ENCODE measurements at regions of chr12 and their contacts with region 1.

Region 1: DNA sequence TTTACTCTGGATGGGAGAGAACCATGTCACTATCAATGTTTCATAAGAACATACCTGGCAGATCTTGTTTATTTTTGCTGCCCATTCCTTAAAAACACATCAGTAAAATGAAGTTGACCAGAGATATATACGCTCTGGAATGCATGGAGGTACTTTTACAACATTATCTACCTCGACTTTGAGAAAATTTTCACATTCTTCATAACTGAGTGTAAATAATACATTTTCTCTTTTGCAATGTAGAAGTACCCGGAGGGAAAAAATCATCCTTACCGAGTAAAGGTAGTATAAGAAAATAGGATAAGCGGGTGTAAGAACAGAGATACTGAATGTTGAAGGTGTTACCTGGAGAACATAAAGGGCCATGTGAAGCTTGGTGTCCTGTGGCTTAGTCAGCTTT is 80.7 kb downstream of the TMEM116 start:
- DNase-seq: no peak
- ATAC-seq: no peak
- H3K4me3 ChIP-seq: no peak overlapping the region
- H3K27ac ChIP-seq: no peak overlapping the region
- H3K4me1 ChIP-seq: no peaks in the 10 kb centered on the region
- H3K27me3 ChIP-seq: no peaks in the 10 kb centered on the region
- CTCF ChIP-seq: no peak
- EP300 ChIP-seq: no peak
- POLR2A ChIP-seq: no peak
- RAD21 ChIP-seq: no peak

Region 2: GRCh38 chr12:111102062-111102739 is 830.0 kb before region 1 on chr12:
- CTCF ChIA-PET with region 1: no interaction called
- POLR2A ChIA-PET with region 1: no interaction called
- in situ Hi-C with region 1: no loop called
- intact Hi-C with region 1: no loop called
- DNase-seq: no peak
- ATAC-seq: no peak
- H3K4me3 ChIP-seq: no peak overlapping the region
- H3K27ac ChIP-seq: no peak overlapping the region
- H3K4me1 ChIP-seq: no peaks in the 10 kb centered on the region
- H3K27me3 ChIP-seq: peaks cover 1 to 32% of the 10 kb centered on the region in 2 experiments; a peak in 3 of 5 replicates
- CTCF ChIP-seq: no peak
- EP300 ChIP-seq: no peak
- POLR2A ChIP-seq: no peak
- RAD21 ChIP-seq: no peak

Region 3: DNA sequence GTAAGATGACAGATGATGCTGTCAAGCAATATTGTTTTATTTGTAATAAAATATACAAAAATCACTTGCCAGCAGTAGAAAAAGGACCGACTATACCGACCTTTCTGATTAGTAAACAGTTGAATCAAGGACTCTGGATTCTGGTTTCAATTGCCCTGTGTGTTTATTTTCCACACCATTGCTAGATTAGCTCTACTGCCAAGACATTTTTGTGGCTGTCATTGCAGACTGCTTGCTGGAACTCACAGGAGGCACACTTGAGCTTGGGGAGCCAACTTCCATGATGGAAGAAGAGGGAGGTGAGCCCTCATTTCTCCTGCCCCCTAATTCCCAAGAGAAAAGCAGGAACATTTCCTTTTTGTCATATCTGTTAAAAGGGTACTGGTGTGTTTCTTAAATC is 39.0 kb before region 1 on chr12:
- CTCF ChIA-PET with region 1: no interaction called
- POLR2A ChIA-PET with region 1: no interaction called
- in situ Hi-C with region 1: no loop called
- intact Hi-C with region 1: no loop called
- DNase-seq: no peak
- ATAC-seq: no peak
- H3K4me3 ChIP-seq: no peak overlapping the region
- H3K27ac ChIP-seq: no peak overlapping the region
- H3K4me1 ChIP-seq: peaks cover 6% of the 10 kb centered on the region
- H3K27me3 ChIP-seq: no peaks in the 10 kb centered on the region
- CTCF ChIP-seq: no peak
- EP300 ChIP-seq: no peak
- POLR2A ChIP-seq: no peak
- RAD21 ChIP-seq: no peak

Region 4: GRCh38 chr12:112768278-112768677 is 836.0 kb after region 1 on chr12:
- CTCF ChIA-PET with region 1: no interaction called
- POLR2A ChIA-PET with region 1: no interaction called
- in situ Hi-C with region 1: no loop called
- intact Hi-C with region 1: loop called (anchors 5 kb)
- DNase-seq: no peak
- ATAC-seq: no peak
- H3K4me3 ChIP-seq: no peak overlapping the region
- H3K27ac ChIP-seq: no peak overlapping the region
- H3K4me1 ChIP-seq: no peaks in the 10 kb centered on the region
- H3K27me3 ChIP-seq: 0 out of 5 replicates have a peak, but pooled peaks cover 0 to 4% of the 10 kb centered on the region in 2 experiments
- CTCF ChIP-seq: no peak
- EP300 ChIP-seq: no peak
- POLR2A ChIP-seq: no peak
- RAD21 ChIP-seq: no peak

Measured in HepG2 (cell line).